ENCODE measurements at regions of chr6 and their contacts with region 1.

Region 1: GRCh38 chr6:151323791-151324487 is 67.4 kb downstream of the ZBTB2 start:
- DNase-seq: peak; percentile 92

Region 2: GRCh38 chr6:150891888-150892485 is 432.0 kb before region 1 on chr6:
- intact Hi-C with region 1: loop called (anchors 2 kb)
- DNase-seq: peak; percentile 83

Region 3: GRCh38 chr6:151014404-151015100 is 309.4 kb before region 1 on chr6:
- intact Hi-C with region 1: loop called (anchors 1 kb)
- DNase-seq: peak; percentile 82

Region 4: GRCh38 chr6:151112130-151112529 is 211.8 kb before region 1 on chr6:
- intact Hi-C with region 1: no loop called
- DNase-seq: no peak

Region 5: DNA sequence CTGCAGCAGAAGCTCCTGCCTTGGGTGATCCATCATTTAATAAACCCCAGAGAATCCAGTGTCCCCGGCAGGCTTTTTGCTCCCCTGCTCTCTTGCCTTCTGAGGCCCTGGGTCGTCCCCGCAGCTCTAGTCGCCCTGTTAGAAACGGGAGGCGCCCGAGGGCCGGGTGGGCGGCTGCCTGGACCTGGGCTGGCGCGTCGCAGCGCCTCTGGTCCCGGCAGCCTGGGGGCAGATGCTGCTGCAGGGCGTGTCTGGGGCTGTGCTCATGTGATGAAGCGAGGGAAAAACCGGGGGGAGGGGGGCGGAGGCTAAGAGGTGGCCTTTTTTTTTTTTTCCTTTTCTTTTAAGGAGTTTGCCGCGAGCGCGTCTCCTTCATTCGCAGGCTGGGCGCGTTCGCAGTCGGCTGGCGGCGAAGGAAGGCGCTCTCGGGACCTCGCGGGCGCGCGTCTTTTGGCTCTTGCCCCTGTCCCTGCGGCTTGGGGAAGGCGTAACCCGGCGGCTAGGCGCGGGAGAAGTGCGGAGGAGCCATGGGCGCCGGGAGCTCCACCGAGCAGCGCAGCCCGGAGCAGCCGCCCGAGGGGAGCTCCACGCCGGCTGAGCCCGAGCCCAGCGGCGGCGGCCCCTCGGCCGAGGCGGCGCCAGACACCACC is 83.8 kb before region 1 on chr6:
- intact Hi-C with region 1: loop called (anchors 2 kb)
- DNase-seq: peak; percentile 82